Activated CD8-positive, alpha-beta T cell treated with anti-CD3 and anti-CD28 coated beads for 36 hours (primary cell): ENCODE measurements at regions of chr15 and their contacts with region 1.

Region 1: DNA sequence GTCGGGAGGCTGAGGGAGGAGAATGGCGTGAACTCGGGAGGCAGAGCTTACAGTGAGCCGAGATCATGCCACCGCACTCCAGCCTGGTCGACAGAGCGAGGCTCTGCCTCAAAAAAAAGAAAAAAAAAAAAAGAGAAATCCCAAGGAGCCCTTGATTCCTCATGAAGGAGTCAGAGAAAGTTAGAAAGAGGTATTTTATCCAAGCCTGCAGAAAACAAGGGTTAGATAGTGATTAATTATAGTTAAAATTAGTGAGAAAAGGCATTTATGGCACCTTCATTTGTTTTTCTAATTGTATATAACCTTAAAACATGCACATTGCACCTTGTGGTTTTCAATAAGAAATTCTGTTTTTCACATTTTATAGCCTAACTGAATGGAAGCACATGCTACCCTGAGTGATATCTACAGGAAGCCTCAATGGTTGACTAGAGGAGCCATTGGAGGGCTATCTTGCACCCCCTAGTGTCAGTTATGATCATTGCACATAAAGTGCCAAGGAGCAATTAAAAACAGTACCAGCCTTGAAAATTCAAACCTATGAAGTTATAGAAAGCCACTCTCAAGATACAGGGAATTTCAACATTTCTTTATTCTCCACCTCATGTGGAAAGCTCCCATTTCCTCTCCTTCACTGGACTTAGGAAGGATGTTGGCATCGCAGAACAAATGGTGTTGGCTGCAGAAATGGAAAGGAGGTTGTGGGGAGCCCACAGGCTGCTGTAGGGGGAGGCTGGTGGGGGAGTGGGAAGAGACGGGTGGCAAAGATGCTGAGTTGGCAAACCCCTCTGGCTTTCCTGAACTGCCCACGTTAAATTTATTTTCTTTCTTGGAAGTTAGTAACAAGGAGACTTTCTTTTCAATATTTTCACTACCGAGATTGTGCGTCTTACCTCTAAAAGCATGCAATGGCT is 48.5 kb downstream of the ITGA11 start:
- DNase-seq: peak; percentile 58
- ATAC-seq: peak; percentile 91
- H3K4me3 Mint-ChIP-seq: no peak overlapping the region
- H3K27ac Mint-ChIP-seq: no peak overlapping the region
- H3K4me1 Mint-ChIP-seq: peaks cover 8% of the 10 kb centered on the region
- H3K27me3 Mint-ChIP-seq: no peaks in the 10 kb centered on the region
- CTCF ChIP-seq: peak; percentile 76

Region 2: GRCh38 chr15:68310178-68310803 is 73.1 kb before region 1 on chr15:
- CTCF ChIA-PET with region 1: interaction called, 59 read pairs
- POLR2A ChIA-PET with region 1: interaction called, 7 read pairs
- intact Hi-C with region 1: loop called (anchors 1 kb)
- DNase-seq: no peak
- ATAC-seq: no peak
- H3K4me3 Mint-ChIP-seq: no peak overlapping the region
- H3K27ac Mint-ChIP-seq: no peak overlapping the region
- H3K4me1 Mint-ChIP-seq: peaks cover 7% of the 10 kb centered on the region
- H3K27me3 Mint-ChIP-seq: peaks cover 1% of the 10 kb centered on the region
- CTCF ChIP-seq: no peak